ENCODE measurements at regions of chr15 and their contacts with region 1.

Region 1: GRCh38 chr15:85794603-85795336 is at the start of gene KLHL25:
- DNase-seq: peak; percentile 95 to 97
- ATAC-seq: peak; percentile 94 to 96 (median 96)
- H3K4me3 ChIP-seq: peak within 1 kb of the TSS; percentile 74
- H3K27ac ChIP-seq: peak within 1 kb of the TSS; percentile 95
- H3K4me1 ChIP-seq: peaks cover 16% of the 10 kb centered on the region
- H3K27me3 ChIP-seq: no peaks in the 10 kb centered on the region
- CTCF ChIP-seq: no peak
- total RNA-seq, gene KLHL25: 5.5 to 15.7 (median 10.6) TPM

Region 2: DNA sequence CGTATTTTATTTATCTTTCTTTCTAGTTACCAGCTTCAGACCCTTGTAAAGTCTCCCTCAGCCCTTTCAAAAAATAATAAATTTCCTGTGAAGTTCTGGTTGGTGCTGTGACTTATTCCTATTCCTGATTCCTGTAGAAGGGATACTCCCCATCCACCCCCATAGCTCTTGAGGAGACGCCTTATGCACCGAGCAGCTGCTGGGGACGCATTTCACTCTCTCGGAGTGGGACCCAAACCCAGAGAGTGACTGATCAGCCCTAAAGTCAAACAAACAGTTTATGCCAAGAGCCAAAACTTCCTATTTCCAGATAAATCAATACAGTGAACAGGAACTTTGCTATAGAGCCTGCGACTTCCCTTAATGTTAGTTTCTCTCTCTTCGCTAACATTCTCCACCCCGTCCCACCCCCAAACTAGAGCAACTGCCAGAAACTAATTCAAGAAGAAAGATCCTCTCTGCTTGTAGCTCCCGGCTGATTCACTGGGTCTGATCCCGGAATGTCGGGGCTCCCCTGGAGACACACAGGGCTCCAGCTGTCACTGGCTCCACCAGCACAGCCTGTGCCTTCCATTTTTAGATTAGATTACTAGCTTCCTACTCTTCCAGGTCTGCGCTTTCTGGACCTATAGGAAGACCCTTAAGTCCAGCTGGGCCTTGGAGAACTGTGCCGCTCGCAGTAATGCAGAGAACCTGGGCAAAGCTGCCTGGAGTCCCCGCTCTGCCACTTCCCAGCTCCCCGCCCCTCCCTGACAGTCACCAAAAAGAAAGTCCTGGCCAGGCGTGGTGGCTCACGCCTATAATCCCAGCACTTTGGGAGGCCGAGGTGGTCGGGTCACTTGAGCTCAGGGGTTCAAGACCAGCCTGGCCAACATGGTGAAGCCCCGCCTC is 45.3 kb before region 1 on chr15:
- intact Hi-C with region 1: loop called in 1 of 2 experiments (anchors 5 kb)
- DNase-seq: peak in 1 of 2 donors; percentile 84
- ATAC-seq: peak; percentile 51 to 81 (median 69)
- H3K4me3 ChIP-seq: peak overlapping the region; percentile 49
- H3K27ac ChIP-seq: peak overlapping the region; percentile 64
- H3K4me1 ChIP-seq: peaks cover 33% of the 10 kb centered on the region
- H3K27me3 ChIP-seq: no peaks in the 10 kb centered on the region
- CTCF ChIP-seq: no peak

Region 3: GRCh38 chr15:85754989-85755388 is 39.8 kb before region 1 on chr15:
- intact Hi-C with region 1: loop called in 1 of 2 experiments (anchors 5 kb)
- DNase-seq: no peak
- ATAC-seq: peak in 3 of 4 donors; percentile 29 to 66 (median 51)
- H3K4me3 ChIP-seq: no peak overlapping the region
- H3K27ac ChIP-seq: no peak overlapping the region
- H3K4me1 ChIP-seq: peaks cover 23% of the 10 kb centered on the region
- H3K27me3 ChIP-seq: no peaks in the 10 kb centered on the region
- CTCF ChIP-seq: no peak

Region 4: DNA sequence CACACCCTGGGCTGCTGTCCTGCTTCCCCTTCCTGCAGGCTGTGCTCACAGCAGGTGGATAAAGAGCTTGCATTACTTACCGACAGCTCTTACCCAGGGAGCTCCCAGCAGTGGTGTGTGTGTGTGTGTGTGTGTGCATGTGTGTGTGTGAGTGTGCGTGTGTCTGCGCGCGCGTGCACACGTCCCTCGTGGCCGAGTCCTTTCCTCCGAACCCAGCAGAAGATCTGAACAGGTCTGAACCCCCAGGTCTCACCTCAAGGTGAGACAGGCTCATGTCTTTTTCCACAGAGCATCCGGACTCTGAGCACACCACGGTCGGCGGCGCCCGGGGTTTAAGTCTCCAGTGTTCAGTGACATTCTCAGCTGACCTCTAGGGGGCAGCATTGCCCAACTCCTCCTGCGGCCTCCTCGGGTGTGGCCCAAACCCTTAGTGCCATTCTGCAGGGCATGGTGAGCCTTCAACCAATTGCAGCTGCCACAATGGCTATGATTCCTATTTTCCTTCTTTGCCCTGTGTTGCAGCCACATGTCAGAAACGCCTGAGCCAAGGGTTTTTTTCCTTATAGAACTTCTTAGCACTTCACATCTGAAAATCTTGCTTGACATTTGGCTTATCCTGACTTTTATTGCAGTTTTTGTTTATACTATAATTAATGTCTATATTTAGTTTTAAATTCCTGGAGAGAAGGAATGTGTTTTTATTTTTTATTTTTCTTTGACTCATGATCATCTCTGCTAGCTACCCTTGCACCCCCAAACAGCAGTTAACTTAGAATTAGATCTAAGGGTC is 64.0 kb after region 1 on chr15:
- intact Hi-C with region 1: no loop called
- DNase-seq: peak; percentile 70 to 82
- ATAC-seq: peak; percentile 89 to 94 (median 91)
- H3K4me3 ChIP-seq: no peak overlapping the region
- H3K27ac ChIP-seq: no peak overlapping the region
- H3K4me1 ChIP-seq: no peaks in the 10 kb centered on the region
- H3K27me3 ChIP-seq: no peaks in the 10 kb centered on the region
- CTCF ChIP-seq: peak; percentile 82

Measured in psoas muscle (tissue), 8 donors.